ENCODE measurements at regions of chr2 and their contacts with region 1.

Region 1: DNA sequence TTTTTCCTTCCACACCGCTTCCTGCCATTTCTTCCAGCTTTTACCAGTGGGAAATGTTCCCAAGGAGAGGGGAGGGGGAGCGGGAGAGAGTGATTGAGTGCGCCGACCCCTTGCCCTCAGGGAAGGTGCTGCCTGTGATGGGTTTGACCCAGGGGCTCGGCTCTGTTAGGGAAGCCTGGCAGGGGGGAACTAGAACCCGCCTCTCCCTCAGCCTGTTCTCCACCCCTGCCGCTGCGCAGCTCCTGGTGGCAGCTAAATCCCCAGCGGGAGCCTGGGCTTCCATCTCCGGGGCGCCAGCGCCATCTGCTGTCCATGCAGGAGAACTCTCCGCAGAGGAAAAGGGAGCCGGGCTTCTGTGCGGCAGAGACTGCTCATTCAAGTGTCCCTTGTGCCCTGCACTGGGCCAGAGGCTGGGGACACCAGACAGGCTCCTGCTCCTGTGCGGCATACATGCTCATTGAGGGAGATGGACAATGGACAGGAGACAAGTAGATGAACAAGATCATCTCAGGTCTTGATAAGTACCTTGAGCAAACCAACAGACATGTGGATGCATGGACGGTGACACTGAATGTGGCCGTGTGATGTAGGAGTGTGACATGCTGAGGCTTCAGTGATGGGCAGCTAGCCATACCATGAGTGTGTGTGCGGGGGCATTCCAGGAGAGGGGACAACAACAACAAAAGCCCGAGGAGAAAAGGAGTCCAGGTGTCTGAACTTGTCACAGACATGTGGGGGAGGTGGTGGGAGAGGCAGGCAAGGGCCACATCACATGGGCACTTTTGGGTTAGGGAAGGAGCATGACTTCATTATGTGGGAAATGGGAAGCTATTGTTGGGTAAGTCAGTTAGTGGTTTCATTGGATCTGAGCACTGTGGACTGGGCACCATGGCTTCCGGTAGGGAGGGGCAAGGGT is 13.3 kb downstream of the CHPF start:
- DNase-seq: peak; percentile 94
- ATAC-seq: peak; percentile 94

Region 2: GRCh38 chr2:219402665-219403515 is 127.4 kb before region 1 on chr2:
- intact Hi-C with region 1: loop called (anchors 5 kb)
- DNase-seq: no peak
- ATAC-seq: peak; percentile 79

Region 3: GRCh38 chr2:219475697-219476651 is 54.3 kb before region 1 on chr2:
- intact Hi-C with region 1: no loop called
- DNase-seq: peak; percentile 85
- ATAC-seq: peak; percentile 74